ENCODE measurements at regions of chr2 and their contacts with region 1.

Region 1: DNA sequence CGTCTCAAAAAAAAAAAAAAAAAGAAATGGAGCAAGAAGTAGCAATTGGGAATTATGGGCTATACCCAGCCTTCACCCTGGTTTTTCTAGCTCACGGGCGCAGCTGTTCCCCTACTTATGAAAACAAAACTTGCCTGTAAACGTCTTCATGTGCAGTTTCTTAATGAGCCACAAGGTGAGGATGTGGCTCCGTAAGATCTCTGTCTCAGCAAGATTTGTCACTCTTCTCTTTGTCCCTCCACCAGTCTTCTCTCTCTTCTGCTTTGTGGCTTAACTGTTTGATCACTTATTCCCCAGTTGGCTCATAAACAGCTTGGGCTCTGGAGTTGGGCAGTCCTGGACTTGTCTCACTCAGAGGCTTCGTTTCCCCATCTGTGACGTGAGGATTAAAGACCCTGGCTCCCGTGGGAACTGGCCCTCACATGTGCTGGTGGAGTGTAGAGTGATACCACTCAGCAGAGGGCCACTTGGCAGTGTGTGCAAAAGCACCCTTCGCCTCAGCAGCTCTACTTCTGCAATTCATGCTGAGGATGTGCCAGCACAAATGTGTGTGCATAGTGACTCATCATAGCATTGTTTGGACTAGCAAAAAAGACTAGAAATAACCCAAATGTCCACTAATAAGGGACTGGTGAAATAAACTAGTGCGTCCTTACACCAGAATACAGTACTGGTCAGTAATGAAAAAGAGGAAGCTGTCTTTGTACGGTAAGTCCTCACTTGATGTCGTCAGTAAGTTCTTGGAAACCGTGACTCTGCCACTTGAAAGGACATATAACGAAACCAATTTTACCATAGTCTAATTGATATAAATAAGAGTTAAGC is 8.7 kb downstream of the CEP68 start:
- DNase-seq: peak in 1 of 2 donors; percentile 83
- ATAC-seq: peak; percentile 82 to 96 (median 88)
- H3K4me3 ChIP-seq: no peak overlapping the region
- H3K4me3 Mint-ChIP-seq: no peak overlapping the region
- H3K27ac ChIP-seq: no peak overlapping the region
- H3K27ac Mint-ChIP-seq: peak overlapping the region in 1 of 2 donors; percentile 35
- H3K4me1 ChIP-seq: peaks cover 20% of the 10 kb centered on the region
- H3K4me1 Mint-ChIP-seq: peaks cover 18 to 19% of the 10 kb centered on the region in 2 donors
- H3K27me3 ChIP-seq: no peaks in the 10 kb centered on the region
- H3K27me3 Mint-ChIP-seq: no peaks in the 10 kb centered on the region
- CTCF ChIP-seq: peak; percentile 84

Region 2: GRCh38 chr2:65129826-65130663 is 65.1 kb after region 1 on chr2 and contains the start of gene RAB1A:
- intact Hi-C with region 1: loop called (anchors 2 kb)
- DNase-seq: peak; percentile 95 to 100
- ATAC-seq: peak; percentile 87 to 96 (median 87)
- H3K4me3 ChIP-seq: peak within 1 kb of the TSS; percentile 84
- H3K4me3 Mint-ChIP-seq: peak within 1 kb of the TSS; percentile 100
- H3K27ac ChIP-seq: peak within 1 kb of the TSS; percentile 94
- H3K27ac Mint-ChIP-seq: peak within 1 kb of the TSS; percentile 99
- H3K4me1 ChIP-seq: peaks cover 30% of the 10 kb centered on the region
- H3K4me1 Mint-ChIP-seq: peaks cover 38 to 47% of the 10 kb centered on the region in 2 donors
- H3K27me3 ChIP-seq: no peaks in the 10 kb centered on the region
- H3K27me3 Mint-ChIP-seq: no peaks in the 10 kb centered on the region
- CTCF ChIP-seq: peak; percentile 9
- total RNA-seq, gene RAB1A: 83.5 to 101 (median 93.6) TPM

Region 3: DNA sequence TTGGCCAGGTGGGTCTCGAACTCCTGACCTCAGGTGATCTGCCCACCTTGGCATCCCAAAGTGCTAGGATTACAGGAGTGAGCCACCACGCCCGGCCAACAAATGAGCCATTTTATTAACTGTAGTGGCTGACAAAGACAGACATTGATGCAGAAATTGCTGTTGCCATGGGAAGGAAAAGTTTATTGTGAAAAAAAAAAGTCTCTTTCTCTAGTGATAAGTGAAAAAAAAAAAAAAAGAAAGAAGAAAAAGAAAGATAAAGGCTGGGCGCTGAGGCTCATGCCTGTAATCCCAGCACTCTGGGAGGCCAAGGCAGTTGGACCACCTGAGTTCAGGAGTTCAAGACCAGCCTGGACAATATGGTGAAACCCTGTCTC is 104.8 kb after region 1 on chr2:
- intact Hi-C with region 1: loop called (anchors 1 kb)
- DNase-seq: no peak
- ATAC-seq: no peak
- H3K4me3 ChIP-seq: no peak overlapping the region
- H3K4me3 Mint-ChIP-seq: no peak overlapping the region
- H3K27ac ChIP-seq: no peak overlapping the region
- H3K27ac Mint-ChIP-seq: no peak overlapping the region
- H3K4me1 ChIP-seq: no peaks in the 10 kb centered on the region
- H3K4me1 Mint-ChIP-seq: no peaks in the 10 kb centered on the region
- H3K27me3 ChIP-seq: no peaks in the 10 kb centered on the region
- H3K27me3 Mint-ChIP-seq: no peaks in the 10 kb centered on the region
- CTCF ChIP-seq: no peak

Region 4: DNA sequence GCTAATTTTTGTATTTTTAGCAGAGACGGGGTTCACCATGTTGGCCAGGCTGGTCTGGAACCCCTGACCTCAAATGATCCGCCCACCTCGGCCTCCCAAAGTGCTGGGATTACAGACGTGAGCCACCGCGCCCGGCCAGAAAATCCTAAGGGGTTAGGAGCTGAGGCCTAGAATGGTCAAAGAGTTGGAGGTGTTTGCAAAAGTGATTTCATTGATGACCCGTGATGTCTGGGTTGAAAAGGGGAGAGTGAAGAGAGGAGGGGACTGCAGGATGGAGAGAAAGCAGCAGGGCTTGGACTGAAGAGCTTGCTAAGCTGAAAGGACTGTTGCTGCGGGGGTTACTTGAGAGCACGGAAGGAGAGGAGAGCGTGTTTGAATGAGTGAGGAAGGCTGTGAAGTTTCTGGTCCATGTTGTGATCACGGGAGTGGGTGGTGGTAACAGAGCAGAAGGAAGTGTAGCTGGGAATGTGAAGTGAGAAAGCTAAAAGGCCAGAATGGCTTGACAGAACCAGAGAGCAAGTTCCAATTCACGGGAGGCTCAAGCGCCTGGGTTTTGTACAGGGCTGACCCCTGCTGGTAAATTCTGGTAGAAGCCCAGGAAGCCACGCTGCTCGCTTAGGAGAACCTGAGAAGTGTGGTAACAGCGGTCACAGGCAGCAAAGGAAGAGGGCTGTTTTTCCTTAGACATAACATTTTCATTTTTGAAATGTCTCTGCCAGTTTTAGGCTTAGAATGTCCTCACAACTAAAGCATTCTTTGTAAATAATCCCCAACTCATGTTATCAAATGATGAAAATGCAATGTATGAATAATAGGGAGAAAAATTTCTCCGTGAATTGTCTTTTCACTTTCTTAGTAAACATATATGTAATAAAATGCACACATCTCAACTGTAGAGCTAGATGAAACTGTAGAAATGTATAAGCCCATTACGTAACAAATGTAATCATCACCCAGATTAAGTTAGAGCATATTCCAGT is 122.2 kb after region 1 on chr2:
- intact Hi-C with region 1: loop called (anchors 1 kb)
- DNase-seq: peak; percentile 47 to 78
- ATAC-seq: peak; percentile 79 to 95 (median 92)
- H3K4me3 ChIP-seq: no peak overlapping the region
- H3K4me3 Mint-ChIP-seq: no peak overlapping the region
- H3K27ac ChIP-seq: no peak overlapping the region
- H3K27ac Mint-ChIP-seq: no peak overlapping the region
- H3K4me1 ChIP-seq: peaks cover 4% of the 10 kb centered on the region
- H3K4me1 Mint-ChIP-seq: peaks cover 6 to 8% of the 10 kb centered on the region in 2 donors
- H3K27me3 ChIP-seq: no peaks in the 10 kb centered on the region
- H3K27me3 Mint-ChIP-seq: peaks cover 14 to 18% of the 10 kb centered on the region in 2 donors
- CTCF ChIP-seq: peak; percentile 77

Measured in natural killer cell (primary cell).